Aorta (tissue), 5 donors: ENCODE measurements at regions of chr11 and their contacts with region 1.

Region 1: DNA sequence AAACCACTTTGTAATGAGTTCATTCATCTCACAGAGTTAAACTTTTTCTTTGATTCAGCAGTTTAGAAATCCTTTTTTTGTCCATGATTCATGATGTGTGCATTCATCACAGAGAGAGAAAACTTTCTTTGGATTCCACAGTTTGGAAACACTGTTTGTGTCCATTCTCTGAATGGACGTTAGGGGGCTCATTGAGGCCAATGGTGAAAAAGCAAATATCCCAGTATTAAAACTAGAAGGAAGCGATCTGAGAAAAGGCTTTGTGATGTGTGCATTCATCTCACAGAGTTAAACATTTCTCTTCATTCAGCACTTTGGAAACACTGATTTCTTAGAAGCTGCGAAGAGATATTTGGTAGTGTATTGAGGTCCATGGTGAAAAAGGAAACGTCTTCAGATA is 155.6 kb upstream of the TRIM48 start:
- DNase-seq: no peak
- ATAC-seq: no peak
- H3K4me3 ChIP-seq: no peak overlapping the region
- H3K27ac ChIP-seq: no peak overlapping the region
- H3K4me1 ChIP-seq: no peaks in the 10 kb centered on the region
- H3K27me3 ChIP-seq: no peaks in the 10 kb centered on the region

Region 2: GRCh38 chr11:55172734-55173415 is 66.5 kb after region 1 on chr11:
- intact Hi-C with region 1: loop called in 1 of 2 experiments (anchors 10 kb)
- DNase-seq: peak; percentile 24 to 49
- ATAC-seq: no peak
- H3K4me3 ChIP-seq: no peak overlapping the region
- H3K27ac ChIP-seq: no peak overlapping the region
- H3K4me1 ChIP-seq: no peaks in the 10 kb centered on the region
- H3K27me3 ChIP-seq: no peaks in the 10 kb centered on the region